ENCODE measurements at regions of chr5 and their contacts with region 1.

Region 1: GRCh38 chr5:108311682-108312081 is 70.2 kb downstream of the FBXL17 start:
- DNase-seq: no peak
- ATAC-seq: no peak
- H3K4me3 ChIP-seq: no peak overlapping the region
- H3K4me3 Mint-ChIP-seq: no peak overlapping the region
- H3K27ac ChIP-seq: no peak overlapping the region
- H3K27ac Mint-ChIP-seq: no peak overlapping the region
- H3K4me1 ChIP-seq: no peaks in the 10 kb centered on the region
- H3K4me1 Mint-ChIP-seq: no peaks in the 10 kb centered on the region
- H3K27me3 ChIP-seq: no peaks in the 10 kb centered on the region
- H3K27me3 Mint-ChIP-seq: no peaks in the 10 kb centered on the region
- CTCF ChIP-seq: no peak

Region 2: GRCh38 chr5:107580889-107581820 is 730.5 kb before region 1 on chr5:
- CTCF ChIA-PET with region 1: no interaction called
- POLR2A ChIA-PET with region 1: no interaction called
- intact Hi-C with region 1: no loop called
- DNase-seq: no peak
- ATAC-seq: no peak
- H3K4me3 ChIP-seq: no peak overlapping the region
- H3K4me3 Mint-ChIP-seq: no peak overlapping the region
- H3K27ac ChIP-seq: no peak overlapping the region
- H3K27ac Mint-ChIP-seq: no peak overlapping the region
- H3K4me1 ChIP-seq: no peaks in the 10 kb centered on the region
- H3K4me1 Mint-ChIP-seq: no peaks in the 10 kb centered on the region
- H3K27me3 ChIP-seq: no peaks in the 10 kb centered on the region
- H3K27me3 Mint-ChIP-seq: peaks cover 14% of the 10 kb centered on the region
- CTCF ChIP-seq: no peak

Region 3: DNA sequence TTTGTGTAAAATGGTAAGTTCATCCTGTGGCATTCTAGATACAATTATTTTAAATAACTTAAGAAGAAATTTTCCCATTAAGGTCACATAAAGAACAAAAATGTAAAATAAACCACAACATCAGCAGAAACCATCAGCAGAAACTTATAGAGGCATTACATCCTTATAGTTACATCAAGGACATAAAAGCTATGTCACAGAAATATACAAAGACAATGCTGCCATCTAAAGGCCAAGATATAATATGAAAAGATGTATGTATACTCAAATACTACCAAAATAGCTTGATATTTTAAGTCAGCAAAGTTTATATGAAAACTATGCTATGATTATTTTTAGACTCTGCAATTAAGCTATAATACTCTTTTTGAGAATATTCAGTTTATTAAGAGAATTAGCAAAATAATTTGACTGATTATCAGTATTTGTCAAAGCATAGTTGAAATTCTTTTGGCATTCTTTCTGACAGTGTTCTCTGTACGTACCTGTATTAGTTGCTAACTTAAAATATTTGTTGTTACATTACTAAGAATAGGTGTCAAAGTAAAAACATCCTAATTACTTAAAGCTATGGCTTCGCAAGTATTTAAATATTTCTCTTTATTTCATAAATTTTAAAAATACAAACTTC is 34.0 kb after region 1 on chr5:
- CTCF ChIA-PET with region 1: no interaction called
- POLR2A ChIA-PET with region 1: no interaction called
- intact Hi-C with region 1: loop called (anchors 5 kb)
- DNase-seq: peak; percentile 54
- ATAC-seq: no peak
- H3K4me3 ChIP-seq: no peak overlapping the region
- H3K4me3 Mint-ChIP-seq: no peak overlapping the region
- H3K27ac ChIP-seq: no peak overlapping the region
- H3K27ac Mint-ChIP-seq: no peak overlapping the region
- H3K4me1 ChIP-seq: no peaks in the 10 kb centered on the region
- H3K4me1 Mint-ChIP-seq: no peaks in the 10 kb centered on the region
- H3K27me3 ChIP-seq: no peaks in the 10 kb centered on the region
- H3K27me3 Mint-ChIP-seq: no peaks in the 10 kb centered on the region
- CTCF ChIP-seq: peak; percentile 74

Region 4: DNA sequence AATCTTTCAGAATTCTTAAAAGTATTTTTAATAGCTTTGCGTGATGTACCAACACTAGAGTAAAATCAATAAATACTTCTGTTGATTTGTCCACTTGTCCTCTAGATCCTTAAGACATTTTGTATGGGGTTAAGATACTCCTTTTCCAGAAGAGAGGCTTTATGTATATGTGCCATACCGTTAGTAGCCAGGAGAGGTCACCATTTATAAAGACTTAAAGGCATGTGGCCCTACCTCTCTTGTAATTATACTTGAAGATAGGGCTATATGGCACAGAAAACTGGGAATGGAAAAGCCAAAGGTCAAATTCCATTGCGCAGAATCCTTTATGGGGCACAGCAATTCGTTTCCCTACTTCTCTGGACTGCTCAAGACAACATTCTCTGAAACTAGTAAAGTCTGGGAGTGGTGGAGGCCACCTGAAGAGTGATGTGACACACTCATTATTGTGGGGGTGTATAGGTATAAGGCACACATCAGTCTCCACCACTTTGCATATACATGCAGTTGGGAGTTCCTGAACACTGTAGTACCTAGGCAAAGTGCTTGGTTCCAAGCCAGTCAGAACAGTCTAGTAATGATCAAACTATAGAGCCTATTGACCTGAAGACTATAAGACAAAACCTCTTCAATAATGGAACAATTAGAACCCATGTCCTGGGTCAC is 210.3 kb after region 1 on chr5:
- CTCF ChIA-PET with region 1: no interaction called
- POLR2A ChIA-PET with region 1: no interaction called
- intact Hi-C with region 1: no loop called
- DNase-seq: peak; percentile 44
- ATAC-seq: peak; percentile 51
- H3K4me3 ChIP-seq: no peak overlapping the region
- H3K4me3 Mint-ChIP-seq: no peak overlapping the region
- H3K27ac ChIP-seq: no peak overlapping the region
- H3K27ac Mint-ChIP-seq: no peak overlapping the region
- H3K4me1 ChIP-seq: peaks cover 5 to 16% of the 10 kb centered on the region in 2 donors
- H3K4me1 Mint-ChIP-seq: peaks cover 35% of the 10 kb centered on the region
- H3K27me3 ChIP-seq: no peaks in the 10 kb centered on the region
- H3K27me3 Mint-ChIP-seq: peaks cover 10% of the 10 kb centered on the region
- CTCF ChIP-seq: peak; percentile 63

Region 5: GRCh38 chr5:109005297-109006009 is 693.8 kb after region 1 on chr5:
- CTCF ChIA-PET with region 1: no interaction called
- POLR2A ChIA-PET with region 1: no interaction called
- intact Hi-C with region 1: no loop called
- DNase-seq: no peak
- ATAC-seq: no peak
- H3K4me3 ChIP-seq: no peak overlapping the region
- H3K4me3 Mint-ChIP-seq: no peak overlapping the region
- H3K27ac ChIP-seq: no peak overlapping the region
- H3K27ac Mint-ChIP-seq: no peak overlapping the region
- H3K4me1 ChIP-seq: no peaks in the 10 kb centered on the region
- H3K4me1 Mint-ChIP-seq: no peaks in the 10 kb centered on the region
- H3K27me3 ChIP-seq: no peaks in the 10 kb centered on the region
- H3K27me3 Mint-ChIP-seq: no peaks in the 10 kb centered on the region
- CTCF ChIP-seq: no peak